ENCODE measurements at regions of chr11 and their contacts with region 1.

Region 1: DNA sequence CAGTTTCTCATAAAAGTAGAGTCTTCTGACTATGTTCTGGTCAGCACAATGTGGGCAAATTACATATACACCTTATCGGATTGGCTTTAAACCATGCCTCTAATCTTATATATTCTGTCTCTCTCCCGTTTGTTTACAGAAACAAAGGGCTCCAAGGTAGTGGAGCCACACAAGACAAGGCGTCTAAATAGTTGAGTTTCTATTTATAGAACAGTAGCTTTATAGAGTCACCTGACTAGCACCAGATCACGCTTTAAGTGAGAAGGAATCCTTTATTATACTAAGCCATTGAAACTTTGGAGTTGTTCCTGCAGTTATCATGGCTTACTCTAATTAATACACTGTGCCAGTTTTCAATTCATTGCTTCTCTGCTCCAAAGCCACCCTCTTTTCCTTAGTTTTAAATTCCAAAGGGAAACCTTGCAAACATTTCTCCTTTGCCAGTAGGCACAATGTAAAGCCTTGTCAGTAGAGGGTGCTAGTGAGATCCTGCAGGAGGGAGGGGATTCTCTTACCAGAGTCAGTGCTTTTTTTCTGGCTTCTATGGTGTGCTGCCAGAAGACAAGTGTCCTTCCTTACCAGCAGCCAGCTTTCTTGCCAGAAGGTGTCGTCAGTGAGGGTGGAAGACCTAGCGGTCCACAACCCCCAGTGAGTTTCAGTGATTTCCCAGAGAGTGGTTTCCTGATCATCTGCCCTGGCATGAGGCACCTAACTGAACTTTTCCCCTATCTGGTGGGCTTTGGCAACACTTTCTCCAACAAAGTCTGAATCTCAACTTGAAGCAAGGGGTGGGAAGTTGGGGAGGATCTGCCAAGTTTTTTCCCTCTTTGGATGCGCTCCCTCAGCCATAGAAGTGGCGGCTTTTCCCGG is 71.7 kb downstream of the RAB38 start:
- DNase-seq: peak; percentile 49
- H3K4me3 ChIP-seq: no peak overlapping the region
- H3K27ac ChIP-seq: no peak overlapping the region
- H3K4me1 ChIP-seq: no peaks in the 10 kb centered on the region
- H3K27me3 ChIP-seq: no peaks in the 10 kb centered on the region
- CTCF ChIP-seq: peak; percentile 60 to 65
- POLR2A ChIP-seq: no peak

Region 2: GRCh38 chr11:88139865-88140264 is 36.3 kb after region 1 on chr11:
- CTCF ChIA-PET with region 1: no interaction called
- POLR2A ChIA-PET with region 1: no interaction called
- dilution Hi-C with region 1: no loop called
- intact Hi-C with region 1: no loop called
- DNase-seq: no peak
- H3K4me3 ChIP-seq: no peak overlapping the region
- H3K27ac ChIP-seq: no peak overlapping the region
- H3K4me1 ChIP-seq: no peaks in the 10 kb centered on the region
- H3K27me3 ChIP-seq: no peaks in the 10 kb centered on the region
- CTCF ChIP-seq: no peak
- POLR2A ChIP-seq: no peak

Region 3: GRCh38 chr11:88231894-88232482 is 128.4 kb after region 1 on chr11:
- CTCF ChIA-PET with region 1: no interaction called
- POLR2A ChIA-PET with region 1: no interaction called
- dilution Hi-C with region 1: no loop called
- intact Hi-C with region 1: loop called (anchors 5 kb)
- DNase-seq: peak; percentile 59
- H3K4me3 ChIP-seq: no peak overlapping the region
- H3K27ac ChIP-seq: no peak overlapping the region
- H3K4me1 ChIP-seq: no peaks in the 10 kb centered on the region
- H3K27me3 ChIP-seq: no peaks in the 10 kb centered on the region
- CTCF ChIP-seq: peak; percentile 48 to 63
- POLR2A ChIP-seq: no peak

Region 4: GRCh38 chr11:88281317-88281712 is 177.7 kb after region 1 on chr11:
- CTCF ChIA-PET with region 1: no interaction called
- POLR2A ChIA-PET with region 1: no interaction called
- dilution Hi-C with region 1: no loop called
- intact Hi-C with region 1: loop called (anchors 10 kb)
- DNase-seq: no peak
- H3K4me3 ChIP-seq: no peak overlapping the region
- H3K27ac ChIP-seq: no peak overlapping the region
- H3K4me1 ChIP-seq: peaks cover 18% of the 10 kb centered on the region
- H3K27me3 ChIP-seq: no peaks in the 10 kb centered on the region
- CTCF ChIP-seq: no peak
- POLR2A ChIP-seq: no peak

Region 5: DNA sequence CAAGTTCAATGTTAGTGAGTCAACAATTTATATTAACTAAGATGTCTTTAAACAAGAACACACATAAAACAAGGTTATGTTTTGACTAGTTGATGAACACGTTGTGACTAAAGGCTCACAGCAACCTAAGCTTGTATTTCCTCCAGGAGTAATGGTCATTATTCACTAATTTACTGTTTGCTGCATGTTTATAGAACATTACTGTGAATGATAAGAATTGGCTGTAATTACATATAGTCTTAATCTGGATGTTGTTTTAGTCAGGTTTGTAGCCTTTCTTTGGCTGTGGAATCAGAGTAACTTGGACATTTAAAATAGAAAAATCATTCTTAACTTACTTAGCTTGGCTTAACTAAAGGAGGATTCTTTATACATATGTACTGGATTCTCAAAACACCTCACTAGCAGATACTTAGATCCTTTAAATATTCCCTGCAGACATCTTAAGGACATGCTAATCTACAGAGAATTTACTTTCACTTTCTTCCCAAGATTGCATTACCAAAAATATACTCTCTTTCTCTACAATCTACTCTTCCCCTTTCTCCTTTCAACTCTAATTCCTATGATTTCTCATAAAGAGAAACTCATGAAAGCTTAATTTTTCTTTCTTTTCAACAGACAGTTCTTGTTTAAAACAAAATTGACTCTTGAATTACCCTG is 553.6 kb after region 1 on chr11:
- CTCF ChIA-PET with region 1: no interaction called
- POLR2A ChIA-PET with region 1: no interaction called
- dilution Hi-C with region 1: no loop called
- intact Hi-C with region 1: loop called (anchors 10 kb)
- DNase-seq: no peak
- H3K4me3 ChIP-seq: no peak overlapping the region
- H3K27ac ChIP-seq: no peak overlapping the region
- H3K4me1 ChIP-seq: no peaks in the 10 kb centered on the region
- H3K27me3 ChIP-seq: no peaks in the 10 kb centered on the region
- CTCF ChIP-seq: no peak
- POLR2A ChIP-seq: no peak

Region 6: GRCh38 chr11:88886796-88887195 is 783.2 kb after region 1 on chr11:
- CTCF ChIA-PET with region 1: no interaction called
- POLR2A ChIA-PET with region 1: no interaction called
- dilution Hi-C with region 1: no loop called
- intact Hi-C with region 1: loop called (anchors 10 kb)
- DNase-seq: peak; percentile 39
- H3K4me3 ChIP-seq: no peak overlapping the region
- H3K27ac ChIP-seq: no peak overlapping the region
- H3K4me1 ChIP-seq: no peaks in the 10 kb centered on the region
- H3K27me3 ChIP-seq: no peaks in the 10 kb centered on the region
- CTCF ChIP-seq: peak; percentile 33 to 43
- POLR2A ChIP-seq: no peak